Activated CD8-positive, alpha-beta T cell treated with anti-CD3 and anti-CD28 coated beads, Interleukin-2, amount 10 ng/mL, durations not matched to agents 7 days and 5 days (primary cell): ENCODE measurements at regions of chr10 and their contacts with region 1.

Region 1: GRCh38 chr10:103192451-103193106 is 493 bp downstream of the NT5C2 start:
- DNase-seq: peak; percentile 81
- ATAC-seq: peak; percentile 70
- H3K4me3 Mint-ChIP-seq: peak overlapping the region; percentile 98
- H3K27ac Mint-ChIP-seq: peak overlapping the region; percentile 98
- H3K4me1 Mint-ChIP-seq: peaks cover 44% of the 10 kb centered on the region
- H3K27me3 Mint-ChIP-seq: no peaks in the 10 kb centered on the region

Region 2: DNA sequence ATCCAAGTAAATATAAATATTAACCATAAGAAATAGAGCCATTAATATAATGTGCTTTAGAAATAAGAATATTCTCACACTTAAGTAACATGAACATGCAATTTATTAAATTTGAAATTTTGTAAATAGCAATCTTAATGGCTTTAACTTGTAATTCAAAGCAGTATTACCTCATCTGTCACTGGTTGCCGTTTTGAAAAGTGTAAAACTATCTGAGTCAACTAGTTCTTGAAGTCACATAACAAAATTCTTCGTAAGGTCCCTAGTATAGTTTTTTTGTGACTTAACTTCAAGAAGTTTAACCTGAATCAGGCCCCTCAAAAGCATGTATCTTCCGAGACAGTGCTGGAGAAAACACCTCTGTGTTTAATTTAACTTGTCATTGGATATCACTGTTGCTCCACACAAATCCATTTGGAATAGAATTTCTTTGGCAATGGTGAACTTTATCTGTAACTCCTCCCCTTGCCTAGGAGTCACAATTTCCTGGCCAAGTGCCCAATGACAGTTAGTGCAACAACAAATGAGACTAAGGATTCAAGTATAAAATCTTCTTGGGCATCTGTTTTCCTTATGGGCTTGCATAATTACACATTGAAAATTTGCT is 46.6 kb before region 1 on chr10:
- CTCF ChIA-PET with region 1: no interaction called
- POLR2A ChIA-PET with region 1: no interaction called
- DNase-seq: no peak
- ATAC-seq: no peak
- H3K4me3 Mint-ChIP-seq: no peak overlapping the region
- H3K27ac Mint-ChIP-seq: no peak overlapping the region
- H3K4me1 Mint-ChIP-seq: no peaks in the 10 kb centered on the region
- H3K27me3 Mint-ChIP-seq: no peaks in the 10 kb centered on the region

Region 3: DNA sequence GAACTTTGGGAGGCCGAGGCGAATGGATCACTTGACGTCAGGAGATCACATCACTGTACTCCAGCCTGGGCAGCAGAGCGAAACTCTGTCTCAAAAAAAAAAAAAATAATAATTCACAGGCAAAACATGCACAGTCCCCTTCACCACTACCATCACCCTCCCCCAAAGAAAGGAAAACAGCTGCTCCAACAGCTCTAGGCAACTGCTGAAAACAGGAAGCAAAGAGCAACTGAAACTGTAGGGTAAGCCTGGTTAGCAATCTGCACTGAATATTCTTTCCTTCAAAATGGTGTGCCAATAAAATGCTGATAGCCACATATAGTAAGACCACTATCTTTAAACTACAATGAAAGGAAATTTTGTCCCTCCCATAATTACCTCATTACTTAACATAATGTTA is 11.3 kb before region 1 on chr10:
- CTCF ChIA-PET with region 1: interaction called, 3 read pairs
- POLR2A ChIA-PET with region 1: interaction called, 11 read pairs
- DNase-seq: no peak
- ATAC-seq: peak; percentile 52
- H3K4me3 Mint-ChIP-seq: no peak overlapping the region
- H3K27ac Mint-ChIP-seq: peak overlapping the region; percentile 11
- H3K4me1 Mint-ChIP-seq: peaks cover 37% of the 10 kb centered on the region
- H3K27me3 Mint-ChIP-seq: no peaks in the 10 kb centered on the region

Region 4: GRCh38 chr10:103231047-103231551 is 38.5 kb after region 1 on chr10:
- CTCF ChIA-PET with region 1: no interaction called
- POLR2A ChIA-PET with region 1: interaction called, 10 read pairs
- DNase-seq: no peak
- ATAC-seq: no peak
- H3K4me3 Mint-ChIP-seq: no peak overlapping the region
- H3K27ac Mint-ChIP-seq: no peak overlapping the region
- H3K4me1 Mint-ChIP-seq: no peaks in the 10 kb centered on the region
- H3K27me3 Mint-ChIP-seq: peaks cover 2% of the 10 kb centered on the region

Region 5: GRCh38 chr10:103244663-103245271 is 52.2 kb after region 1 on chr10:
- CTCF ChIA-PET with region 1: interaction called, 10 read pairs
- POLR2A ChIA-PET with region 1: interaction called, 3 read pairs
- DNase-seq: peak; percentile 73
- ATAC-seq: peak; percentile 80
- H3K4me3 Mint-ChIP-seq: no peak overlapping the region
- H3K27ac Mint-ChIP-seq: no peak overlapping the region
- H3K4me1 Mint-ChIP-seq: peaks cover 19% of the 10 kb centered on the region
- H3K27me3 Mint-ChIP-seq: peaks cover 6% of the 10 kb centered on the region